ENCODE measurements at regions of chr5 and their contacts with region 1.

Region 1: GRCh38 chr5:113330533-113331208 is 104.1 kb downstream of the TSSK1B start:
- DNase-seq: no peak
- H3K4me3 ChIP-seq: peak overlapping the region in 1 of 8 donors; percentile 14
- H3K27ac ChIP-seq: peak overlapping the region in 2 of 8 donors; percentile 28 to 30
- H3K4me1 ChIP-seq: peaks cover 7 to 18% (median 9%) of the 10 kb centered on the region in 6 donors
- H3K27me3 ChIP-seq: no peaks in the 10 kb centered on the region
- CTCF ChIP-seq: peak in 9 of 11 experiments; percentile 7 to 51 (median 39)
- POLR2A ChIP-seq: no peak

Region 2: DNA sequence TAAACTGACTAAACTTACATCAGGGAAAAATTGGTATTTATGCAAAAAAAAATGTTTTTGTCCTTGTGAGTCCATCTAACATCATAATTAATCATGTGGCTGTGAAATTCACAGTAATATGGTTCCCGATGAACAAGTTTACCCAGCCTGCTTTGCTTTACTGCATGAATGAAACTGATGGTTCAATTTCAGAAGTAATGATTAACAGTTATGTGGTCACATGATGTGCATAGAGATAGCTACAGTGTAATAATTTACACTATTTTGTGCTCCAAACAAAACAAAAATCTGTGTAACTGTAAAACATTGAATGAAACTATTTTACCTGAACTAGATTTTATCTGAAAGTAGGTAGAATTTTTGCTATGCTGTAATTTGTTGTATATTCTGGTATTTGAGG is 486.2 kb before region 1 on chr5:
- intact Hi-C with region 1: no loop called
- DNase-seq: no peak
- H3K4me3 ChIP-seq: no peak overlapping the region
- H3K27ac ChIP-seq: no peak overlapping the region
- H3K4me1 ChIP-seq: peaks cover 0 to 11% (median 3%) of the 10 kb centered on the region in 6 donors
- H3K27me3 ChIP-seq: no peaks in the 10 kb centered on the region
- CTCF ChIP-seq: no peak
- POLR2A ChIP-seq: no peak

Region 3: DNA sequence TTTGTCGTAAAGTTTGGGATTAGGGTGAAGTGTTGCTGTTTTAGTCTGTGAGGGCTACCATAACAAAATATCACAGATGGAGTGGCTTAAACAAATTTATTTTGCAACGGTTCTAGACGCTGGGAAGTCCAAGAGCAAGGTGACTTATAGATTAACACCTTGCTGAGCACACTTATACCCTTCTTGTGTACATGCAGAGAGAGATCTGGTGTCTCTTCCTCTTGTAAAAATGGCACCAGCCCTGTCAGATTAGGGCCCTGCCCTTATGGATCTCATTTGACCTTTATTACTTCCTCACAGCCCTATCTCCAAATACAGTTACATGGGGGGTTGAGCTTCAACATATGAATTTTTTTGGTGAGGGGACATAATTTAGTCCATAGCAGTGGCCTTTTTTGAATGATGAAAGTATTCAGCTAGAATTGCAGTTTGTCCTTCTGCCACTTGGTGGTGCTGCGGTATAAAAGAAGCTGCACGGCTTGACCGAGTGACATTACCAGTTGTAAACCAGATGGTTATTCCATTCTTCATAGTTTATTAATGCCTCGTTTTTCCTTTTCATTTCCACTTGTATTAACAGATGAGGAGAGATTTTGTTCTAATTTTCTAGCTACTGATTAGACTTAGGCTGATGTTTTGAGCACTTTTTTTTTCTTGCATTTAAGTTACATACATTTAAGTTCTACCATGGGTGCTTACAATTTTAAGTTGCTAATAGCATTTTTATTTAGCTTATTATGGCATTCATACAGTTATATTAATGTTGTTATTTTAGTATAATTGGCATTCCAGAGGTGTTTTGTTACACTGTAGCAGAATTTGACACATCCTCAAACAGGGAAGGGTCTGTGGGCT is 334.7 kb before region 1 on chr5:
- intact Hi-C with region 1: loop called (anchors 5 kb)
- DNase-seq: peak; percentile 80
- H3K4me3 ChIP-seq: no peak overlapping the region
- H3K27ac ChIP-seq: no peak overlapping the region
- H3K4me1 ChIP-seq: peaks cover 0 to 54% (median 13%) of the 10 kb centered on the region in 6 donors
- H3K27me3 ChIP-seq: no peaks in the 10 kb centered on the region
- CTCF ChIP-seq: peak; percentile 66 to 88 (median 84)
- POLR2A ChIP-seq: no peak

Region 4: GRCh38 chr5:113278976-113279375 is 51.7 kb before region 1 on chr5:
- intact Hi-C with region 1: no loop called
- DNase-seq: no peak
- H3K4me3 ChIP-seq: no peak overlapping the region
- H3K27ac ChIP-seq: no peak overlapping the region
- H3K4me1 ChIP-seq: peaks cover 0 to 8% (median under 1%) of the 10 kb centered on the region in 6 donors
- H3K27me3 ChIP-seq: no peaks in the 10 kb centered on the region
- CTCF ChIP-seq: no peak
- POLR2A ChIP-seq: no peak

Region 5: GRCh38 chr5:114311968-114312367 is 981.3 kb after region 1 on chr5:
- intact Hi-C with region 1: no loop called
- DNase-seq: no peak
- H3K4me3 ChIP-seq: no peak overlapping the region
- H3K27ac ChIP-seq: no peak overlapping the region
- H3K4me1 ChIP-seq: no peaks in the 10 kb centered on the region
- H3K27me3 ChIP-seq: no peaks in the 10 kb centered on the region
- CTCF ChIP-seq: no peak
- POLR2A ChIP-seq: no peak